ENCODE measurements at regions of chr14 and their contacts with region 1.

Region 1: DNA sequence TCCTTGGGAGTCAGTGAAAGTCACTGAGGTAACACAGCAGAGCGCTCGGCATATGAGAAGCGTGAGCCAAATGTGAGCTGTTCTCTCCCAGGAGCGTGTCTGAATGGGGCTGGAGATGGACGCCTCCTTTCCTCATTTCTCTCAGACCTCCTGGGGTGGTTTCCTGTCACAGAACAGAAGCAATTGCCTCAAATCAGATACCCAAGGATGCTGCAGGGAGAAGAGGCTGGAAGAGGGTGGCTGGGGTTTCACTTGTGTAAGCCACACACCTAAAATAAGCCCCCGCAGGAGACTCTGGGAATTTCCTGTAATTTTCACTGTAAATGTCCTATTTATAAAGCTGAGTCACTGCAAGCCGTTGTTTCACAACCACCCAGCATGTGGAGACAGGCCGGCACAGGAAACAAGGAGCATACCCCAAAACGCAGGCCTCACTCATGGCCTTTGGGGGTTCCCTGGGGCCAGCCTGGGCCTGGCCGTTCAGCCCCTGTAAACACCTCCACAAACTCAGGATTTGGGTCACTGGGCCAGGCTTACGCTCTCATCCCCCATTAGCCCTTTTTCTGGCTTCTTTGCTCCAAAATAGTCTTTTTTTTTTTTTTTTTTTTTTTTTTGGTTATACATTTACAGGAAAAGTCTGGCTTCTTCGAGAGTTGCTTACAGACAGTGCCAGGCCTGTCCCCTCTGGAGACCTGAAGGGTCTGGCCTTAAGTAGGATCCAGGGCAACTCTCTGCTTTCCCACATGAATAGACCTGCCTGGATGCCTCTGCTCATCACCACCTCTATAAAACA is 55.3 kb downstream of the VCPKMT start:
- DNase-seq: no peak
- H3K4me3 Mint-ChIP-seq: peak overlapping the region; percentile 97
- H3K27ac Mint-ChIP-seq: peak overlapping the region; percentile 100
- H3K4me1 Mint-ChIP-seq: peaks cover 83% of the 10 kb centered on the region
- H3K27me3 Mint-ChIP-seq: no peaks in the 10 kb centered on the region

Region 2: GRCh38 chr14:49767562-49768300 is 293.3 kb before region 1 on chr14 and contains the start of gene KLHDC2:
- intact Hi-C with region 1: loop called (anchors 1 kb)
- DNase-seq: peak; percentile 89
- H3K4me3 Mint-ChIP-seq: peak within 1 kb of the TSS; percentile 96
- H3K27ac Mint-ChIP-seq: peak within 1 kb of the TSS; percentile 100
- H3K4me1 Mint-ChIP-seq: peaks cover 31% of the 10 kb centered on the region
- H3K27me3 Mint-ChIP-seq: no peaks in the 10 kb centered on the region
- total RNA-seq, gene KLHDC2: 28.9 and 31.6 TPM in 2 replicates

Region 3: GRCh38 chr14:50038398-50039119 is 22.5 kb before region 1 on chr14:
- intact Hi-C with region 1: loop called (anchors 1 kb)
- DNase-seq: peak; percentile 58
- H3K4me3 Mint-ChIP-seq: peak overlapping the region; percentile 68
- H3K27ac Mint-ChIP-seq: peak overlapping the region; percentile 97
- H3K4me1 Mint-ChIP-seq: peaks cover 48% of the 10 kb centered on the region
- H3K27me3 Mint-ChIP-seq: no peaks in the 10 kb centered on the region

Region 4: GRCh38 chr14:50082784-50083466 is 21.9 kb after region 1 on chr14:
- intact Hi-C with region 1: loop called (anchors 1 kb)
- DNase-seq: peak; percentile 81
- H3K4me3 Mint-ChIP-seq: peak overlapping the region; percentile 49
- H3K27ac Mint-ChIP-seq: peak overlapping the region; percentile 91
- H3K4me1 Mint-ChIP-seq: peaks cover 62% of the 10 kb centered on the region
- H3K27me3 Mint-ChIP-seq: no peaks in the 10 kb centered on the region

Region 5: DNA sequence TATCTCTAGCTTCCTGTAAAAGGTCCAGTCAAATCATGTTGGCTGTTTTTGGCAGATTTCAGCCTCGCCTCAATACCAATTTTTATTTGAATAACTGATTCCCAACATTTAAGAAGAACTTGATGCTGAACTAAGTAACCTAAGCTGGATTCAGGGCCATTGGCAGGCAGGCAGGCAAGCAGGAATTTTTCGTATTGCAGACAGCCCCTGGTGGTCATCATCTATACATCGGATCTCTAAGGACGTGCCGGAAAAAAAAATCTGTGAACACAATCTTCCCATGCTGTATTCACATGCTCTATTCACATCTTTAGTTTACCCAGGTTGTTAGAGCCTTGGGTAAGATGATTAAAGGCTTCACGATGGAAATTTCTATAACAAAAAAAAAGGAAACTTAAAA is 48.3 kb after region 1 on chr14:
- intact Hi-C with region 1: loop called (anchors 2 kb)
- DNase-seq: no peak
- H3K4me3 Mint-ChIP-seq: no peak overlapping the region
- H3K27ac Mint-ChIP-seq: no peak overlapping the region
- H3K4me1 Mint-ChIP-seq: peaks cover 20% of the 10 kb centered on the region
- H3K27me3 Mint-ChIP-seq: no peaks in the 10 kb centered on the region